Endothelial cell of umbilical vein (primary cell): ENCODE measurements at regions of chr19 and their contacts with region 1.

Region 1: DNA sequence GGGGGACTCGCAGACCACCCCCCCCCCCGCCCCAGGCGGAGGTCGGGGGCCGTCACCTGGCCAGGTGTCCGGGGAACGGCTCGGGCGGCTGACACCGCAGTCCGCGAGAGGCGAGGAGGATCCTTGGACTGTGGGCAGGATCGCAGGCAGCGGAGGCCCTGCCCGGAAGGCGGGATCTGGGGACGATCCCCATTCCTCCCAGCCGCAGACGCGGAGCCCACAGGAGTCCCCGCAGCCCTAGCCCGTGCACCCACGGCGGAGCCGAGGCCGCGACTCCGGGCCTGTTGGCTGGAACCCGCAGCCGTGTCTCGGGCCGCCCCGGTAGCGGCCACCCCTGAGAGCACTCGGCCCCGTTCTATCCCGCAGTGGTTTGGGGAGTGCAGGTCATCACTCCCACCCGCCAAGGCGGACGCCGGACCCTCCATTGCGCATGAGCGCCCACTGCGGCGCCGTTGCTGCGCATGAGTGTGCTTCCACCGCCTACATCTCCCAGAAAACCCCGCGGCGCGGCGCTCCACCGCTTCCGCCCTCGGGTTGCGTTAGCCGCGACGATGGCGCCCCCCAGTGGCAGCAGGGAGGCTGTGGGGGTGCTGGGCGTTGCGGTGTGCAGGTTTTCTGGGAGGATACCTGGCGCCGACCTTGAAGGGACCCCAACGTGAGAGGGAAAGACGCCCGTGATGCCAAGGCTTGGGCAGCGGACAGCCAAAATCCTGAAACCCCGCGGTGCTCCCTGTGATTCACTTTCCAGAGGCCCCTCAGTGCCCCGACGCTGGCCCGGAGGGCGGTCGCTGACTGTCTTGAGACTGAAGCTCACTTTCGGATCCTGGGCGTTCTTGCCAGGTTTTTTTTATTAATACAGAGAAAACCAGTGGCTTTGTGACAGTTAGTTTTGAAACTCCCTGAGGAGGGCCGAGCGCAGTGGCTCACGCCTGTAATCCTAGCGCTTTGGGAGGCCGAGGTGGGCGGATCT is 4.4 kb upstream of the ZNF329 start:
- DNase-seq: peak; percentile 93
- H3K4me3 ChIP-seq: peak overlapping the region; percentile 39 to 75 (median 63)
- H3K27ac ChIP-seq: no peak overlapping the region
- H3K4me1 ChIP-seq: no peaks in the 10 kb centered on the region
- H3K27me3 ChIP-seq: no peaks in the 10 kb centered on the region
- CTCF ChIP-seq: peak; percentile 96 to 99
- POLR2A ChIP-seq: peak; percentile 74

Region 2: DNA sequence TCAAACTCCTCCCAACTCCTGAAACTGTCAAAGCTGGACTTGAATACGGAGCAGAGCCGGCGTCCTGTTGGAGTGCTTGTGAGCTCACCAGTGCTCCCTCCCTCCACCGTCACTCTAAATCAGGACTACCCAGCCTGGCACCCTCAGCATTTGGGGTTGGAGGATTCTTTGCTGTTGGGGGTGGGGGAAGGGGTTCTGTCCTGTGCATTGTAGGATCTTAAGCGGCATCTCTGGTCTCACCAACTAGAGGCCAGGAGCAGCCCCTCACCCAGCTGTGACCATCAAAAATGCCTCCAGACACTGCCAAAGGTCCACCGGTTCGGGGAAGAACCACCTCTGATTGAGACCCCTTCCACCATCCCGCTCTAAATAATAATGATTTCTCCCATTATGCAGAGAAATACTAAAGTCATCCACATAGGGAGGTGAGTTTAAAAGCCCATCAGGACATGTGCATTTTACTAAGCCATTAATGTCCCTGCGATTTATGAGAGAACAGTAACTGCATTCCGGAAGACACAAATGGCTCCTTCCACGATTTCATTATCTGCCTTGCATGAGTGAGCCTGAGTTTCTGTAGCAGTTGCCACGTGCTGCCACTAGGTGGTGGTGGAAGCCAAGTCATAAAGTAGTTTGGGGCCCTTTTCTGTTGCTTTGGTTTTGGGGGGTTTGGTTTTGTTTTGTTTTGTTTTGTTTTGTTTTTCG is 1051.2 kb before region 1 on chr19:
- CTCF ChIA-PET with region 1: interaction called, 3 read pairs
- POLR2A ChIA-PET with region 1: no interaction called
- dilution Hi-C with region 1: no loop called
- intact Hi-C with region 1: loop called (anchors 2 kb)
- DNase-seq: peak; percentile 19
- H3K4me3 ChIP-seq: no peak overlapping the region
- H3K27ac ChIP-seq: no peak overlapping the region
- H3K4me1 ChIP-seq: no peaks in the 10 kb centered on the region
- H3K27me3 ChIP-seq: no peaks in the 10 kb centered on the region
- CTCF ChIP-seq: peak; percentile 58 to 62
- POLR2A ChIP-seq: no peak

Region 3: DNA sequence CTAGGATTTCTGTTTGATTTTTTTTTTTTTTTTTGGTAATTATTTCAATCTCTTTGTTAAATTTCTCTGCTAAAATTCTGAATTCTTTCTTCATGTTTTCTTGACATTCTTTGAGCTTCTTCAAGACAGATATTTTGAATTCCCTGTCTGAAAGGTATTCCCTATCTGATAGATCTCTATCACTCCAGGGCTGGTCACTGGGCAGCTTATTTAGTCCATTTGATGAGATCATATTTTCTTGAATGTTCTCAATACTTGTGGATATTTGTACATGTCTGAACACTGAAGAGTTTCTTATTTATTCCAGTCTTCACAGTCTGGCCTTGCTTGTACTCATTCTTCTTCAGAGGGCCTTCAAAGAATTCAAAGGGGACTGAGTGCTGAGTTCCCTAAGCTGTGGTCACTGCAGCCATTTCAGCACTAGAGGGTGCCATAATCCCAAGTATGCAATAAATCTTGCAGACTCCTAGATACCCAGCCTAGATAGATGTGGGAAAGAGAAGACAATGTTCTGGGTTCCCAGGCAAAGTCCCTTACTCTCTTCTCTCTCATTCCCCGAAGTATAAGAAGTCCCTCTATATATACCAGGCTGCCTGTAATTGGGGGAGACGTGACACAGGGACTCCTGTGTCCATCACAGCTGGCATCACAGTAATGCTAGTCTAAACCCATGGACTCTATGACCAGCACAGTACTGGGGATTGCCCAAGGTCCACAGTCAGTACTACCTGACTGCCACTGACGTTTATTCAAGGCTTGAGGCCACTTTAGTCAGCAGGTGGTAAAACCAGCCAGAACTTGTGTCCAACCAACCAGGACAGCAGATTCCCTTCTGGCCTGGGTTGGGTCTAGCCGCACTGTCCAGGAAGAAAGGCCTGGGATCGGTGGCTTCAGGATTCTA is 689.2 kb before region 1 on chr19:
- CTCF ChIA-PET with region 1: no interaction called
- POLR2A ChIA-PET with region 1: no interaction called
- dilution Hi-C with region 1: no loop called
- intact Hi-C with region 1: loop called (anchors 1 kb)
- DNase-seq: peak; percentile 16
- H3K4me3 ChIP-seq: no peak overlapping the region
- H3K27ac ChIP-seq: no peak overlapping the region
- H3K4me1 ChIP-seq: no peaks in the 10 kb centered on the region
- H3K27me3 ChIP-seq: no peaks in the 10 kb centered on the region
- CTCF ChIP-seq: peak; percentile 19 to 43
- POLR2A ChIP-seq: no peak

Region 4: DNA sequence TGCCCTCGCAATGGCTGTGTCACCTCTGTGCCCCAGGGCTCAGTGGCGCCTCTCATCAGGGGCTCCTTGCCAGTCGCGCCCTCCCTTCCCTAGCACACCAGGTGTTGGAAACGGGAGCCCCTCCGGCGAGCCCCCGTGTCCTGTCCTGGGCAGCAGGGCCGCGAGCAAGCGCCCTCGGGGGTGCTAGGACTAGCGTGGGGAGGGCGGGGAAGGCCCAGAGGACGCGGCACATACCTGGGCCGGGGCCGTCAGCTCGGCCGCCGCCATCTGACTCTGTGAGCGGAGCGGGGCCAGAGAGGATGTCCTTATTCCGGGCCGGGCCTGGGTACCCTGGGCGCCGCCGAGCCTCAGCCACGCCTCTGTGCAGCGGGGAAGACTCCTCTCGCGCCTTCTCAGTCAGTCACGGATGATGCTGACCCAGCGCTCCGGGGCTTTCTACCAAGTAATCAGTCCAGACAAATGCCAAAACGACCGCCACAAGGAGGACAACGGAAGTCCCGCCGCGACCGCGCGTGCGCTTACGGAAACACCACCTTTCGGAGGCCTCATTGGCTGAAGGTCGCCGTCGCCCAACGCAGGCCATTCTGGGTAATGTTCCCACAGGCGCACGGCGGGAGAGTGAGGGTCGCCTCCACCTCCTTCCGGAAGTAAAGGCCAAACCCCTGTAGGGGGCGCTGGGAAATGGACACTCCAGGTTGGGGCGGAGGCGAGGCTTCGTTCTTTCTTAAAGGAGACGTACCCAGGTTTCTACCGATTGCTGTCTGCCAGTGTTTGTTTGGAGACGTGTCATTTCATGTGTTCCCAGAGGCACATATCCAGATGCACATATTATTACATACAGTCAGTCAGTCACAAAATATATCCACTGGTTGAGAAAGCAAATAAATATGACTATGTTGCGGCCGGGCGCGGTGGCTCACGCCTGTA is 207.5 kb before region 1 on chr19 and contains the start of gene ZNF256:
- CTCF ChIA-PET with region 1: no interaction called
- POLR2A ChIA-PET with region 1: no interaction called
- dilution Hi-C with region 1: no loop called
- intact Hi-C with region 1: loop called (anchors 10 kb)
- DNase-seq: peak; percentile 92
- H3K4me3 ChIP-seq: peak within 1 kb of the TSS; percentile 24 to 66 (median 53)
- H3K27ac ChIP-seq: no peak within 1 kb of the TSS
- H3K4me1 ChIP-seq: peaks cover 5% of the 10 kb centered on the region
- H3K27me3 ChIP-seq: no peaks in the 10 kb centered on the region
- CTCF ChIP-seq: peak; percentile 55 to 65
- POLR2A ChIP-seq: peak; percentile 50
- total RNA-seq, gene ZNF256: 3.7 and 4.0 TPM in 2 replicates

Region 5: GRCh38 chr19:58021541-58022282 is 133.3 kb before region 1 on chr19:
- CTCF ChIA-PET with region 1: no interaction called
- POLR2A ChIA-PET with region 1: no interaction called
- dilution Hi-C with region 1: no loop called
- intact Hi-C with region 1: loop called (anchors 2 kb)
- DNase-seq: peak; percentile 6
- H3K4me3 ChIP-seq: no peak overlapping the region
- H3K27ac ChIP-seq: no peak overlapping the region
- H3K4me1 ChIP-seq: no peaks in the 10 kb centered on the region
- H3K27me3 ChIP-seq: no peaks in the 10 kb centered on the region
- CTCF ChIP-seq: peak in 1 of 2 donors; percentile 12
- POLR2A ChIP-seq: no peak

Region 6: DNA sequence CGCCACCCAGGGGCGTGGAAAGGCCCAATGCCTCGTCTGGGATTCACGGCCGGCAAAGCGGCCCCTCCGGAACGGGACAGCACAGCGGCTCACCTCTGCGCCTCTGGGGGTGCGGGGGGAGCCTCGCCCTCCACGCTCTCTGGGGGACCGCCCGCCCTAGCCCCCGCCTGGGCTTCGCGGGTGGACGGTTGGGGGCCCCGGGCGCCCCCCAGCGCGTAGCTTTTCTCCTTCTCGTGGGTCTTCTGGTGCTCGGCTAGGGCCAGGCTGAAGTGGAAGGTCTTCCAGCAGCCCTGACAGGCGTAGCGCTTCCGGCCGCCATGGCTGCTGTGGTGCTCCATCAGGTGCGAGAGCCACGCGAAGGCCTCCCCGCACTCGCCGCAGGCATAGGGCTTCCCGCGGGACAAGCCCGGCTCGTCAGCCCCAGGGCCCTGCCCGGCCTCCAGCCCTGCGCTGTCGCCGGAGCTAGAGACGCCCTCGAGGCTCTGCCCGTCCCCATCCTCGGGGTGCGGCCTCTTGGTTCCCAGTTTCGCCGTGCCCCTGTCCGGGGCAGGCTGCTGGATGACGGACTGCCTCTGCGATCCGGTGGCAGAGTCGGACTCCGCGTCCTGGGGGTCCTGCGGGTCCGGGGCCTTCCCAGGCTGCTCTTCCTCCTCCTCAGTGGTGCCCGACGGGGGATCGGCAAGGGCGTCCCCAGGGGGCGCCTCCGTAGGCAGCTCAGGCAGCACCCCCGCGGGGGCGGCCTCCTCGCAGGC is 70.2 kb before region 1 on chr19:
- CTCF ChIA-PET with region 1: no interaction called
- POLR2A ChIA-PET with region 1: no interaction called
- dilution Hi-C with region 1: no loop called
- intact Hi-C with region 1: no loop called
- DNase-seq: no peak
- H3K4me3 ChIP-seq: no peak overlapping the region
- H3K27ac ChIP-seq: no peak overlapping the region
- H3K4me1 ChIP-seq: no peaks in the 10 kb centered on the region
- H3K27me3 ChIP-seq: no peaks in the 10 kb centered on the region
- CTCF ChIP-seq: no peak
- POLR2A ChIP-seq: no peak

Region 7: GRCh38 chr19:58117841-58118575 is 37.0 kb before region 1 on chr19:
- CTCF ChIA-PET with region 1: no interaction called
- POLR2A ChIA-PET with region 1: no interaction called
- dilution Hi-C with region 1: no loop called
- intact Hi-C with region 1: no loop called
- DNase-seq: no peak
- H3K4me3 ChIP-seq: no peak overlapping the region
- H3K27ac ChIP-seq: no peak overlapping the region
- H3K4me1 ChIP-seq: no peaks in the 10 kb centered on the region
- H3K27me3 ChIP-seq: no peaks in the 10 kb centered on the region
- CTCF ChIP-seq: no peak
- POLR2A ChIP-seq: no peak

Region 8: GRCh38 chr19:58144467-58144866 is 10.5 kb before region 1 on chr19:
- CTCF ChIA-PET with region 1: no interaction called
- POLR2A ChIA-PET with region 1: no interaction called
- dilution Hi-C with region 1: no loop called
- intact Hi-C with region 1: no loop called
- DNase-seq: no peak
- H3K4me3 ChIP-seq: no peak overlapping the region
- H3K27ac ChIP-seq: no peak overlapping the region
- H3K4me1 ChIP-seq: no peaks in the 10 kb centered on the region
- H3K27me3 ChIP-seq: no peaks in the 10 kb centered on the region
- CTCF ChIP-seq: no peak
- POLR2A ChIP-seq: no peak

Region 9: DNA sequence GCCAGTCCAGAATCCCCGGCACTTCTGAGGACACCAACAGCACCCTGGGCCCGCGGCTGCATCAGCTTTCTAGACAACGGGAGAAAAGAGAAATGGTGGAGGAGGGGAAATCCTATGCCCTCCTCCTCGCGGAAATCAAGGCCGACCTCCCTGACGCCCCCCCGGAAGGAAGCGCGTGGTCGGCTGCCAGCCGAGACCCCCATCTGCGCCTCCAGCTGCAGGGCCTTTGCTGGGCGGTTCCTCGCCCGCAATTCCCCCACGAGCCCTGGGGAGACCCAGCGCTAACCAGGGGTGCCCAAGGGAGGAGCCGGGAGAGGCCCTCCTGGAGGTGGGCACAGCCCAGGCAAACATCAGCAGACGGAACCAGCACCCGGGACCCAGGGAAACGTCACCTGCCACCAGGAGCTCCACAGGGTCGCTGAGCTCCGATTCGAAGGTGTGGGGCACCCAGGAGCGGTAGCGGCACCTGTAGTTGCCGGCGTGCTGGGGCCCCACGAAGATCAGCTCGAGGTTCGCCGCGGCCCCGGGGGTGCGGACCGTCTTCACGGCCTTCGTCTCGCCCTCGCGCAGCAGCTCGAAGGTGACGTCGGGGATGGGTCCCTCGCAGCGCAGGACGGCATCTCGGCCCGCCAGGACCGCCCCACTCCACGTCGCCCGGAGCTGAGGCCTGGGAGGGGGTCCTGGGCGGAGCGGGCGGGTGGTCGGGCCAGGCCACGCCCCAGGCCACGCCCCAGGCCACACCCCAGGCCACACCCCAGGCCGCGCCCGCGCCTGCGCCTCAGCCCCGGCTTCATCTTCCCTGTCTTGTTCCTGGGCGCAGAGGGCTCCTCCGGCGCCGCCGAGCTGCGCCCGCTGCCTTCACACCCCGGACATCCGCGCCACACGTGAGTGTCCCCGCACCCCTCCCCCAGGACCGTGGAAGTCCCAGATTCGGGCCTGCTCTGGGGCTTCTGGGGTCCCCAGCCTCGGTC is 192.3 kb after region 1 on chr19:
- CTCF ChIA-PET with region 1: no interaction called
- POLR2A ChIA-PET with region 1: no interaction called
- dilution Hi-C with region 1: no loop called
- intact Hi-C with region 1: no loop called
- DNase-seq: peak; percentile 25
- H3K4me3 ChIP-seq: peak overlapping the region; percentile 10 to 47 (median 38)
- H3K27ac ChIP-seq: no peak overlapping the region
- H3K4me1 ChIP-seq: peaks cover 5% of the 10 kb centered on the region
- H3K27me3 ChIP-seq: peaks cover 21 to 45% of the 10 kb centered on the region in 2 experiments
- CTCF ChIP-seq: no peak
- POLR2A ChIP-seq: no peak